ENCODE measurements at regions of chr1 and their contacts with region 1.

Region 1: GRCh38 chr1:43373066-43373940 is 5.5 kb upstream of the ELOVL1 start:
- DNase-seq: peak; percentile 80
- H3K4me3 ChIP-seq: no peak overlapping the region
- H3K27ac ChIP-seq: peak overlapping the region; percentile 81
- H3K4me1 ChIP-seq: peaks cover 32% of the 10 kb centered on the region
- H3K27me3 ChIP-seq: no peaks in the 10 kb centered on the region
- CTCF ChIP-seq: no peak
- POLR2A ChIP-seq: no peak

Region 2: DNA sequence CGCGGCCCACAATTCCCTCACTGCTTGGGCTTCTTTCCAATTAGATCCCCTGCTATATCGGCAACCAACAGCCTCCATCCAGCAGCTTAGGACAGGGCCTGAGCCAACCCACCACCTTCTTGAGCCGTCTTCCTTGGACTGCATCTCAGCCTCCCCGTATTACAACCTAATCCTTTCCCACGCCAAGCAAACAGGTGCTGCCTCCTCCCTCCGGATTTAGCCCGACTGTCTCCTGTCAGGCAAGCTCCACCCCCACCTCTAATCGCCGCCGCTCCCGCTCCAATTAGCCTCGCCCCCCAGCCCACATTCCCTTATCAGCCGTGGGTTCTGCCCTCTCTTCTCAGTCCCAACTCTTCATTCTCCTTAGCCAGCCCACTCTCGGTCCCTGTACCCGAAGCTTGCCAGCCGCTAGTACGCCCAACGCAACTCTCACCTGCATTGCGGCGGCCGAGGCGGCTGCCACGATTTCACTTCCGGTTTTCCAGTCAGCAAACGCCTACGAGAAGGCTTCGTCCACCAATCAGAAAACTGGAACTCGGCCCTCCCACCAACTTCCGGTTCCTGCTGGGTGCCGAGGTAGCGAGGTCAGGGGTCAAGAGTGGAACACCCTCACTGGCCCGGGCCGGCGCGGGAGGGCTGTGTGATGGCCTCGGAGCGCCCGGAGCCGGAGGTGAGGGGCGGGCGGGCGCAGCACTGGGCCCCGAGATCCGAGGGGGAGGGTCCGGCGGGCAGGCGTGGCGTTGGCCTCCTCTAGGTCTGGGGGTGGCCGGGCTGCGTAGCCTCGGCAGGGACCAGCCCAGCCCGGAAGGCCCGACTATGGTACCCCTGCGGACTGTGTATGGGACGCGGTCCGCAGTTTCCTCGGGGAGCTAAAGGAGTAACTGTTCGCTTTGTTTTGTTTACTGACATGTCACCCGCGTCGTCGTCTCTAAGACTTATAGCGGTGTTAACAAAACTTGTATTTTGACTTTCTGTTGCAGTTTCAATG is 16.3 kb after region 1 on chr1 and contains the starts of genes MED8 and SZT2:
- CTCF ChIA-PET with region 1: no interaction called
- POLR2A ChIA-PET with region 1: interaction called, 5 read pairs
- dilution Hi-C with region 1: no loop called
- intact Hi-C with region 1: loop called (anchors 1 kb)
- DNase-seq: peak; percentile 97
- H3K4me3 ChIP-seq: peak within 1 kb of the TSS; percentile 83 to 98 (median 96)
- H3K27ac ChIP-seq: peak within 1 kb of the TSS; percentile 70
- H3K4me1 ChIP-seq: peaks cover 18% of the 10 kb centered on the region
- H3K27me3 ChIP-seq: no peaks in the 10 kb centered on the region
- CTCF ChIP-seq: no peak
- POLR2A ChIP-seq: peak; percentile 83
- total RNA-seq, gene MED8: 41.9 and 45.6 TPM in 2 replicates
- total RNA-seq, gene SZT2: 49.9 and 50.3 TPM in 2 replicates

Region 3: DNA sequence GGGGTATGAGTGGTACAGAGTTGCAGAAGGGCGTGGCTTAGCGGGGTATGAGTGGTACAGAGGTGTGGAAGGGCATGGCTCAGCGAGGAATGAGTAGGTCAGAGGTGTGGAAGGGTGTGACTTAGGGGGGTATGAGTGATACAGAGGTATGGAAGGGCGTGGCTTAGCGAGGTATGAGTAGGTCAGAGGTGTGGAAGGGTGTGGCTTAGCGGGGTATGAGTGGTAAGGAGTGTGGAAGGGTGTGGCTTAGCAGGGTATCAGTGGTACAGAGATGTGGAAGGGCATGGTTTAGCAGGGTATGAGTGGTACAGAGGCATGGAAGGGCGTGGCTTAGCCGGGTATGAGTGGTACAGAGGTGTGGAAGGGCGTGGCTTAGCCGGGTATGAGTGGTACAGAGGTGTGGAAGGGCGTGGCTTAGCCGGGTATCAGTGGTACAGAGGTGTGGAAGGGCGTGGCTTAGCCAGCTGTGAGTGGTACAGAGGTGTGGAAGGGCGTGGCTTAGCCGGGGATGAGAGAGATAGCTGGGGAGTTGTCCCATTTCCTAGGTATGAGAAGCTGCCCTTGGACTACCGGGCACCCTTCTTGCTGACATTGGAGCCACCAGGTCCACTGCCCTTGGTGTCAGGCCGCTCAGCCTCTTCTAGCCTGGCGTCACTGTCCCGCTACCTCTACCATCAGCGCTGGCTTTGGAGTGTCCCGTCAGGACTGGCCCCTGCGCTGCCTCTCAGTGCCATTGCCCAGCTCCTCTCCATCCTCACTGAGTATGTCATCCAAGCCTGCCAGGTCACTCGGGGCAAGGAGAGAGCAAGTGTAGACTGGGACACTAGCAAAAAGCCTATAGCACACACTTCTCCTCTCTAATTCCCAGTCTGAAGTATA is 50.6 kb after region 1 on chr1:
- CTCF ChIA-PET with region 1: no interaction called
- POLR2A ChIA-PET with region 1: no interaction called
- dilution Hi-C with region 1: no loop called
- intact Hi-C with region 1: no loop called
- DNase-seq: no peak
- H3K4me3 ChIP-seq: no peak overlapping the region
- H3K27ac ChIP-seq: no peak overlapping the region
- H3K4me1 ChIP-seq: no peaks in the 10 kb centered on the region
- H3K27me3 ChIP-seq: no peaks in the 10 kb centered on the region
- CTCF ChIP-seq: no peak
- POLR2A ChIP-seq: no peak